ENCODE measurements at regions of chr11 and their contacts with region 1.

Region 1: DNA sequence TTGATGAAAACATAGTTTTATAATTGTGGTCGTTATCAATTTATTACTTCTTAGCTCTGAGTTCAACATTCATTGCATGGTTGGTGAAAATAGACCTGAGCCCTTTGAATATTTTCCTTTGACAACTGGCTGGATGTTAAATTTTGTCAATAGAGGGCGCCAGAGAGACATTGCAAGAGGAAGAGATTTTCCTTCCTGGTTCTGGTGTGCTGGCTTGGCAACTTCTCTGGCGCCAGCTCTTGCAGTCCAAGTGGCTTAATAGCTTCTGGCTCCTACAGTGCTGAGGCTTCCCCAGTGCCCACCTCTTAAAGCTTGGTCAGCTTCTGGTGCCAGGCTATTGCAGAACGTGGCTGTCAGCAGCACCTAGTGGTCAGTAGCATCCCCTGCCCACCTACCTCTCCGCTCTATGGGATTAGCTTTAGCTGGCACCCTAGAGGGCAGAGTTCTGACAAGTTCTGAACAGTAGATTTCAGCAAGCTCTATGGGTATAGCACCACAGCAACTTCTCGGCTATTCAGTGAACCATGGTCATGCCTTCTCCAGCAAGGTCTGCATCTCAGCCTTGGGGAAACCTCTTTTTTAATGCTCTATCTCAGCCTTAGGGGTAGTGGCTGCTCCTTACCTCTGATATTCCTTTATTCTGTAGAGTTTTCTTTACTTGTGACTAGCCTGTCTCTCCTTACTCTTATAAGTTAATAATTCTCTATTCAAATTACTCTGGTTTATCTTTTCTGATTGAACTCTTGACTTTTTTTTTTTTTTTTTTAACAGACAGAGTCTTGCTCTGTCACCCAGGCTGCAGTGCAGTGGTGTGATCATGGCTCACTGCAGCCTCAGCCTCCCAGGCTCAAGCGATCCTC is 59.4 kb downstream of the ACER3 start:
- DNase-seq: peak; percentile 81 to 85
- H3K4me3 ChIP-seq: no peak overlapping the region
- H3K27ac ChIP-seq: no peak overlapping the region
- H3K4me1 ChIP-seq: peaks cover 0 to 5% (median 2%) of the 10 kb centered on the region in 4 donors
- H3K27me3 ChIP-seq: no peaks in the 10 kb centered on the region
- CTCF ChIP-seq: peak; percentile 82 to 92

Region 2: DNA sequence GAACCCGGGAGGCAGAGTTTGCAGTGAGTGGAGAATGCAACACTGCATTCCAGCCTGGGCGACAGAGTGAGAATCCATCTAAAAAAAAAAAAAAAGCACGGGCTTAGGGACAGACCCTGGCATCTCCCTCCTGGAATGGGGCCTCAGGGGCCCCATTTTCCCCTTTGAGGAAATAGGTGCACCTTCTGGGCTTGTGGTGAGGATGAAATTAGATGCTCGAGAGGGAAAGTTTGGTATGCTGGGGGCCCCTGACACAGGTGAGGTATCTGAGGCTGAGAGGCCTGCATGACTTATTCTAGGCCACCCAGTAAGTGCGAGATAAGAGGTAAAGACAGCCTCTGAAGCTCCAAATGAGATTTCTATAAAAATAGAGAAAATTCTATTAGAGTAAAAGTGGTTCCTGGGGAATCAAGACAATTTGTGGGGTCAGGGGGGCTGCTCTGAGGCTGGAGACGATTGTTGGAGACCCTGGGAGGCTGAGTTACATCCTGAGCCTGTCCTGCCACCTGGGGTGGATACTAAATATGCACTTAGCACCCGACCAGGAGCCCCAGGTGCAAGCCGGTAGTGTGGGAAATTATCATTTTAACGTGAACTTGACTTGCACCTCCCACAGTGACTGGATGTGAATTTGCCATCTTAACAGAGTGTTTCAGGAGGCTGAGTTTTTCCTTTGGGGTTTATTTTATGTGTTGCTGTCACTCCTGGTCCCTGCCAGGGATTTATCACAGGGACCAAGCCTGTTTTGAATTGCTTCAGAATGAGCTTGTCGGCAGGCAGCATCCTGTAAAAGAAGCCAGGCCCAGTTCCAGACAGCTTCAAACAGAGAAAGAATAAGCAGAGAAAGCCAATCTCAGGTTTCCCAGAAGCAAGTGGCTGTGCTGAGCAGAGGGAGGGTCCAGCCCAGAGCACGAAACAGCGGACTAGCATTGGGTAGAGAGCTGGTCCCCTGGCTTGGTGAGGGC is 185.4 kb before region 1 on chr11:
- intact Hi-C with region 1: loop called (anchors 5 kb)
- DNase-seq: no peak
- H3K4me3 ChIP-seq: no peak overlapping the region
- H3K27ac ChIP-seq: no peak overlapping the region
- H3K4me1 ChIP-seq: no peaks in the 10 kb centered on the region
- H3K27me3 ChIP-seq: no peaks in the 10 kb centered on the region
- CTCF ChIP-seq: no peak

Region 3: DNA sequence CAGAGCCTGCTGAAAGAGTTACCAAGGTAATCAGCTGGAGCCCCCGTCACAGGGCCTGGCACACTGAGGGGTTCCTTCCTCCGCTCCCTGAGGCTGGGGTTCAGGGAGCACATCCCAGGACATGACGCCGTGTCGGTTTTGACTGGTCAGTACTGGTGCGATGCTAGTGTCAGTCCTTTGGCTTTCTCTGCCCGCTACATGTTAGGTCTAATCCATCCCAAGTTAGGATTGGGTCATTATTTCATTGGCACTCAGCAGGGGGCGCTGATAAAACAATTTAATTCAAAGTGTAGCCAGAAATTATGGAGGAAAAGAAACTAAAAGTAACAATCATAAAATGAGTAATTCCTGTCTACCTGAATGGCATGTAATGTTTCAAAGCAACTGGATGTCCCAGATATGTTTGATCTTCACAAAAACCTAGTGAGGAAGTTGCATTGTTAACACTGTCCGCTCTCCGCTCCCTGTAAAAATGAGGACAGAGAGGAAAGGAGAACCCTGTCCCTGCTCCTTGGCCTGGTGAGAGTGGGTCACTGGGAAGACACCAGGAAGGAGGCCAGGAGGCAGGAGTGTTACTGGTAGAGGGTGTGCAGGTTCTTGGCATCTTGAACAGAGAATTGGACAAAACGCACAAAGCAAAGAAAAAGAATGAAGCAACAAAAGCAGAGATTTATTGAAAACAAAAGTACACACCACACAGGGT is 109.8 kb before region 1 on chr11:
- intact Hi-C with region 1: loop called (anchors 5 kb)
- DNase-seq: no peak
- H3K4me3 ChIP-seq: no peak overlapping the region
- H3K27ac ChIP-seq: no peak overlapping the region
- H3K4me1 ChIP-seq: peaks cover 0 to 21% (median 7%) of the 10 kb centered on the region in 4 donors
- H3K27me3 ChIP-seq: no peaks in the 10 kb centered on the region
- CTCF ChIP-seq: peak; percentile 45 to 62

Region 4: DNA sequence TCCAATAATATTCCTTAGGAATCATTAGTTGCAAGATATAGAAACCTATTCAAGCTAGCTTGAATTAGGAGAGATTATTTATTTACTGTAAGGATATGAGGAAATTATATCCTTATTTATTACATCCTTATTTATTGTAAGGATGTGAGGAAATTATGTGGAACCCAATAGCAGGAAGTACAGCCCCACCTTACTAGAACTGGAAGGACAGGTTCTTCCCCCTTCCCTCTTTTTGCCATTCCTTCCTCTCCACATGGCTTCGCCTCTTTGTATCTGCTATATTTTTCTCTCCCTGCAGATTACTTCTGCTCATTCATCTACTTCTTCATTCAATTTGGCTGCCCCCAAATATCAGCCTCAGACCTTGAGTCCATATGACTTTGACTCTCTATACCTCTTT is 64.6 kb after region 1 on chr11:
- intact Hi-C with region 1: no loop called
- DNase-seq: no peak
- H3K4me3 ChIP-seq: no peak overlapping the region
- H3K27ac ChIP-seq: no peak overlapping the region
- H3K4me1 ChIP-seq: no peaks in the 10 kb centered on the region
- H3K27me3 ChIP-seq: no peaks in the 10 kb centered on the region
- CTCF ChIP-seq: no peak

Region 5: GRCh38 chr11:77039491-77040400 is 119.6 kb after region 1 on chr11:
- intact Hi-C with region 1: loop called (anchors 5 kb)
- DNase-seq: no peak
- H3K4me3 ChIP-seq: peak overlapping the region; percentile 15 to 41
- H3K27ac ChIP-seq: no peak overlapping the region
- H3K4me1 ChIP-seq: peaks cover 0 to 14% (median 9%) of the 10 kb centered on the region in 4 donors
- H3K27me3 ChIP-seq: peaks cover 0 to 66% of the 10 kb centered on the region in 2 donors
- CTCF ChIP-seq: peak in 1 of 2 experiments; percentile 37

Measured in tibial artery (tissue), 4 donors.